GM13976 (cell line): ENCODE measurements at regions of chr7 and their contacts with region 1.

Region 1: DNA sequence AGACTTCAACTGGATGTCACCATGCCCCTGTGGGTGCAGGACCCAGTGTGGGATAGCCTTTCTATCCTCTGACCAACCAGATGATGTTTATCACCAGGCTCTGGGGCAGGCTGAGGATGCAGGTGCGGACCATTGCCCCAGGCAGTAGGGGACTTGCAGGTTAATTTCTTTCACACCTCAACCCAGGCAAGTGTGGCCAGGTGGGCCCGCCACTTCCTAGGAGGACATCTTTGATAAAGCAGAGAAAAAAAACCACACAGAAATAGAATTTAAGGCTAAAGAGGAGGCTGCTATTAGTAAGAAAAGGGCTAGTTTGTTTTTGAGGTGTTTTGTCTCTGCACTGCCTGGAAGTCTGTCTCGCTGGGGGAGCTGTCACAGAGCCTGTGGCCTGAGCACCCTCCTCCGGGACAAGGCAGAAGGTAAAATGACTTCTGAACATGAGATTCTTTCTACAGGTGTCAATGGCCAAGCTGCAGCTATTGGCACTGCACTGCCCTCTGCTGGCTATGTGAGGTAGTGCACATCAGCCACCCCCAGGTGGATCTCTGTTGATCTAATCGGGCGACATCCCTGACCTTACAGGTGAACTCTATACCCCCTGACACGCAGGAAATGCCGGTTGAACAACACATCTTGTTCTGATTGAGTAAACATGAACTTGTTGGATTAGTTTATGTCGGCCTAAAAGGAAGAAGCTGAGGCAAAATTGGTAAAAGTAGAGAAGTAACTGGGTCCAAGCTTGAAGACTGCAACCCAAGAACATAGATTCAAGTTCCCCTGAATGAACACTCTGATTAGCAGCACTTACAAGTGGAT is 21.0 kb downstream of the UPP1 start:
- DNase-seq: peak; percentile 83
- CTCF ChIP-seq: peak; percentile 94

Region 2: GRCh38 chr7:47945261-47946001 is 164.6 kb before region 1 on chr7:
- in situ Hi-C with region 1: loop called (anchors 10 kb)
- DNase-seq: peak; percentile 62
- CTCF ChIP-seq: peak; percentile 55

Region 3: DNA sequence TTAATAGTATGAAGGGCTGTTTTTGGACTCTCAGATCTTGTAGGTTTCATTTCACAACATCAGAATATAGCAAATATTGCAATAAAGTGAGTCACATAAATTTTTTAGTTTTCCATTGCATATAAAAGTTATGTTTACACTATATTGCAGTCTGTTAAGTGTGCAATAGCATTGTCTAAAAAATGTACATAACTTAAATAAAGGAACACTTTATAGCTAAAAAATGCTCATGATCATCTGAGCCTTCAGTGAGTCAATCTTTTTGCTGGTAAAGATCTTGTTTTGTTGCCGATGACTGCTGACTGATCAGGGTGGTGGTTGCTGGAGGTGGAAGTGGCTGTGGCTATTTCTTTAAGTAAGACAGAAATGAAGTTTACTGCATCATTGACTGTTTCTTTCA is 103.2 kb after region 1 on chr7:
- in situ Hi-C with region 1: loop called (anchors 25 kb)
- DNase-seq: no peak
- CTCF ChIP-seq: no peak